Activated T-helper 1 cell treated with anti-CD3 and anti-CD28 coated beads, Interleukin-12 subunit alpha, Interleukin-12 subunit beta, Interleukin-2, Interleukin-4 antibody, amounts not matched to agents 30 ng/mL and 10 ng/mL and 1 ng/mL, durations not matched to agents 14 hours and 24 hours and 36 hours (primary cell): ENCODE measurements at regions of chr11 and their contacts with region 1.

Region 1: DNA sequence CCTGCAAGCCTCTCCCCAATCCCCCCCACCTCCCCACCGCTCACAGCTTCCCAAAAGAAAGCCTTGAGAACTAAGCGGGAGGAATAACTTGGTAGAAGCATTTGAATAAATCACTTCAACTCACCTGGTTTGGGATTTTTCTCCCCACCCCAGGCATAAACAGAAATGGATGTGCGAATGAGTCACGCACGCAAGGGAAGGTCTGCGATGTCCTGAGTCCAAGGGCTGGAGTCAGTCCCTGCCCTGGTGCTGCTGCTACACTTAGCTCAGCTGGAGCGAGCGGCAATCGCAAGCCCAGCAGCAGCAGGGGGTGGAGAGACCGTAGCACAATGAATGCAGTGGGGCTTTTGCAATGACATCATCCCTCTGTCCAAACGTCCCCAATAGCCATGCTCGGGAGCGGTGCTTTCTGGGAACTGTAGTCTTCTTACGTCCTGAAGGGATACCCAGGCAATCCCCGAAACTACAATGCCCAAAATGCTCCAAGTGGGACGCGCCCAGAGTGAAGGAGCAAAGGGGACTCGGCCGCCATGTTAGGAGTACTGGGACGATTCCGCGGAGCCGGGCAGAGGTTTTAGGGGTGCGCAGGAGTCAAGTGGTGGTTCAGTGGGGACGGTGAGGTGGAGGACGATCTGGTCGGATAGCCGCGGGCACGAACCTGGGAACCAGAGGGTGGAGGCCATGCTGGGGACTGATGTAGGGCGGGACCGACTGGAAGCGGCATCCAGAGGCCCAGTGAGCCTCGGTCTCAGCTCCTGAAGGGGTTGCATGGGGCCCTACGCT is at the start of gene RAB30:
- DNase-seq: peak; percentile 93
- H3K4me3 Mint-ChIP-seq: no peak within 1 kb of the TSS
- H3K27ac Mint-ChIP-seq: no peak within 1 kb of the TSS
- H3K4me1 Mint-ChIP-seq: peaks cover 26% of the 10 kb centered on the region
- H3K27me3 Mint-ChIP-seq: no peaks in the 10 kb centered on the region
- total RNA-seq, gene RAB30: 15.2 and 16.0 TPM in 2 replicates

Region 2: DNA sequence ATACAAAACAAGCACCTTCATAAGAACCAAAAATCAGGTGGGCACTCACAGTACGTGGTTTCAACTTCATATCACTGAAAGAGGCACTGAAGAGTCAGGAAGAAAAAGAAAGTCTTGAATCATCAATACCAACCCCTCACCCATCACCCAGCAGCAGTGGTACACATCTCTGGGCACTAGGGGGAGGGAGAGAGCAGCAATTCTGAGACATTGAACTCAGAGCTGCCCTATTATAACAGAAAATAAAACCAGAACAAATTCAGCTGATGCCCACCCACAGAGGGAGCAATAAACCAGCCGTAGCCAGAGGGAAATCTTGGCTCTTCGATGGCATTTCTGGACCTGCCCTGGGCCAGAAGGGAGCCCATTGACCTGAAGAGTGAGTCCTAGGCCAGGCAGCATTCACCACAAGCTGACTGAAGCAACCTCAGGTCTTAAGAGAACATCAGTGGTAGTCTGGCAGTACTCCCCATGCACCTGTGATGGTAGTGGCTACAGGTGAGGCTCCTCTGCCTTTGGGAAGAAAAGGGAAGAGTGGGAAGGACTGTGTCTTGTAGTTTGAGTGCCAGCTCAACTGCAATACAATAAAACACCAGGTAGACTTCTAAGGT is 295.9 kb before region 1 on chr11:
- intact Hi-C with region 1: no loop called
- DNase-seq: peak; percentile 21
- H3K4me3 Mint-ChIP-seq: no peak overlapping the region
- H3K27ac Mint-ChIP-seq: no peak overlapping the region
- H3K4me1 Mint-ChIP-seq: peaks cover 4% of the 10 kb centered on the region
- H3K27me3 Mint-ChIP-seq: peaks cover 24% of the 10 kb centered on the region

Region 3: GRCh38 chr11:82842019-82842418 is 229.7 kb before region 1 on chr11:
- intact Hi-C with region 1: no loop called
- DNase-seq: no peak
- H3K4me3 Mint-ChIP-seq: no peak overlapping the region
- H3K27ac Mint-ChIP-seq: no peak overlapping the region
- H3K4me1 Mint-ChIP-seq: no peaks in the 10 kb centered on the region
- H3K27me3 Mint-ChIP-seq: no peaks in the 10 kb centered on the region

Region 4: DNA sequence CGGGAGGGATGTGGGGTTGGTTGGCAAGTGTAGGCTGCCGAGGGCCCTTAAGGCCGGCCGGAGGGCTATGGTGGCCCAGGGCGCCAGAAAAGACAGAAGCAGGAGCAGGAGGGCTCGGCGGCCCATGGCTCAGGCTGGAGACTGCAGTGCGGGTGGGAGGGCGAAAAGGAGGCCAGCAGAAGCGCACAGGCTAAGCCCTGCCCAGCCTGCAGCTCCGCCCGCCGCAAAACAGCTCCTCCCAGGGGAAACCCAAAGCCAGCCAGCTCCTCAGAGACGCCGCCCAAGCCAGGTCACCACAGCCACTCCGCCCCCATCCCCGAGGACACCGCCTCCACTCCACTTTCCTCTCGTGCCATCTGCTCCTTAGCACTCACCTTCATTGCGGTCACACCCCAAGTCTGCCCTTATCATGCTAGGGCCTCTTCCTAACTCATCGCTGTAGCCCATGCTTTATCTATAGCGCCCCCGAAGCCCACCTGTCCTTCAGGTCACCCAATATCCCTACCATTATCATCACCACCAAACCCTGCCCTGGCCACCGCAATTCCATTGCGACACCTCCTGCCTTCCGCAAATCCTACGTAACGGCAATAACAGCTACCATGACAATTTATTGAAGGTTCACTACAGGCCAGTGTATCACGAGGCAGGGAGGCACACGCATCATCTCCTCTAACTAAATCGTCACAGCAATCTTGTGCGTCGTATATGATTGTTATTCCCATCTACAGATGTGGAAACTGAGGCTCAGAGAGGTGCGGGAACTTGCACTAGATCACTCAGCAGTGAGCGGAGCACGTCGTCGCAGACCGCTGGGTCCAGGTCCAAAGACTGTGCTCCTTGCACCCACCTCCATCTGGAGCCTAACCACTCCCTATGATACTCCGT is 171.2 kb before region 1 on chr11 and contains the start of gene PRCP:
- intact Hi-C with region 1: loop called (anchors 1 kb)
- DNase-seq: peak; percentile 93
- H3K4me3 Mint-ChIP-seq: peak within 1 kb of the TSS; percentile 99
- H3K27ac Mint-ChIP-seq: peak within 1 kb of the TSS; percentile 100
- H3K4me1 Mint-ChIP-seq: peaks cover 70% of the 10 kb centered on the region
- H3K27me3 Mint-ChIP-seq: no peaks in the 10 kb centered on the region
- total RNA-seq, gene PRCP: 22.7 and 24.0 TPM in 2 replicates

Region 5: DNA sequence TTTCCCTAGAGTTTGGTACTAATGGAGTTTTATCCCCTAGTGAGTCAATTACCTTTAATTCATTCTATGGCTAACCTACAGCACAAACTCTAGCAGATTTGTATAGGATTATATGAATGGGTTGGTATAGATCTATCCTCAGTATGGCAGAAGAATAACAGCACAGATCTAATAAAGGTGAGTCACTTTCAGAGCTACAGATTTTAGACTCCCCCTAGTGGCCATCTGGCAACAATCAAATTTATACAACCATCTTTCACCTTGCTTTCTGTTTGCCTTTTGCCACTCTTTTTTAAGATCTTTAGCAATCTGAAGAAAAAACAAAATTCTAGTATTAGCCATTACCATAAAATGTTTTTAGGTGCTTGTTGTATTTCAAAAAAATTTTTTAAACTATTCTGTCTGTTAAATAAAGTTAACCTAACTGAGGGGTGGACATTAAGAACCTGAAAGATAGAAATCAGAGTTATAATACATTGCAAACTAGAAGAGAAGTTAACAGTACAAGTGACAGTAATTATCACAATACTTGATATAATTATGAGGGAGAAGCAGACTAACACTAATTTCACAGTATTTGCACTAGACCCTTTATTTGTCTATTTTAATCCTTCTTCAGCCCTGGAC is 144.4 kb before region 1 on chr11:
- intact Hi-C with region 1: loop called (anchors 2 kb)
- DNase-seq: no peak
- H3K4me3 Mint-ChIP-seq: no peak overlapping the region
- H3K27ac Mint-ChIP-seq: no peak overlapping the region
- H3K4me1 Mint-ChIP-seq: peaks cover 19% of the 10 kb centered on the region
- H3K27me3 Mint-ChIP-seq: no peaks in the 10 kb centered on the region

Region 6: DNA sequence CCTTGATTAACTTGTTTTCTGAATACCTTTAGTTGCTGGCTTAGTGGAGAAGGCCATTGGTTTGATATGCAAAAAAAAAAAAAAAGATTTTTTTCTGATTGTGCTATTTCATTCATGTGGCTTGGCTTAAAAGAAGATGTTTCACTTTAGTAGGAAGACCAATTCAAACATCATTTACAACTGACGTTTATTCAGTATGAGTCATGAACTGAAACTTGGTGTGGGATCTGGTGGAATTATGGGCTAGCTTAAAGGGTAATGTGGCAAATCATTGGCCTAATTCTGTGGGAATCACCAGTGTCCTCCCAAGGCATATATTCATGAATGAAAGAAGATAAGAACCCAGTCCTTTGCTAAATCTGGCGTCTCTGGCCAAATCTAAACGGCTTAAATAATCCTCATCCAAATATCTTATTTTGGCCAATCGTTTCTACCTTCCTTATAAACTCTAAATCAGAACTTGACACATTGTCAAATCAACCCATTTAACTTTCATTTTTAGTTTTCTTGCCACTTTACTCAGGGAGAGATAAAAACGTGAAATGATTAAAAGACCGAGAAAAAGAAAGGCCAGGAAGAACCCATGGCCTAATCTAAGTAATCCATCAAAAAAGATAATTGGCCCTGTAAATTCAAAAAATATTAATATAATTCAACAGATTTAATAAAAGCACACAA is 93.2 kb before region 1 on chr11:
- intact Hi-C with region 1: loop called (anchors 1 kb)
- DNase-seq: no peak
- H3K4me3 Mint-ChIP-seq: peak overlapping the region; percentile 21
- H3K27ac Mint-ChIP-seq: peak overlapping the region; percentile 42
- H3K4me1 Mint-ChIP-seq: peaks cover 38% of the 10 kb centered on the region
- H3K27me3 Mint-ChIP-seq: peaks cover 3% of the 10 kb centered on the region

Region 7: GRCh38 chr11:83007909-83008580 is 63.7 kb before region 1 on chr11:
- intact Hi-C with region 1: loop called (anchors 1 kb)
- DNase-seq: no peak
- H3K4me3 Mint-ChIP-seq: no peak overlapping the region
- H3K27ac Mint-ChIP-seq: no peak overlapping the region
- H3K4me1 Mint-ChIP-seq: peaks cover 57% of the 10 kb centered on the region
- H3K27me3 Mint-ChIP-seq: no peaks in the 10 kb centered on the region

Region 8: DNA sequence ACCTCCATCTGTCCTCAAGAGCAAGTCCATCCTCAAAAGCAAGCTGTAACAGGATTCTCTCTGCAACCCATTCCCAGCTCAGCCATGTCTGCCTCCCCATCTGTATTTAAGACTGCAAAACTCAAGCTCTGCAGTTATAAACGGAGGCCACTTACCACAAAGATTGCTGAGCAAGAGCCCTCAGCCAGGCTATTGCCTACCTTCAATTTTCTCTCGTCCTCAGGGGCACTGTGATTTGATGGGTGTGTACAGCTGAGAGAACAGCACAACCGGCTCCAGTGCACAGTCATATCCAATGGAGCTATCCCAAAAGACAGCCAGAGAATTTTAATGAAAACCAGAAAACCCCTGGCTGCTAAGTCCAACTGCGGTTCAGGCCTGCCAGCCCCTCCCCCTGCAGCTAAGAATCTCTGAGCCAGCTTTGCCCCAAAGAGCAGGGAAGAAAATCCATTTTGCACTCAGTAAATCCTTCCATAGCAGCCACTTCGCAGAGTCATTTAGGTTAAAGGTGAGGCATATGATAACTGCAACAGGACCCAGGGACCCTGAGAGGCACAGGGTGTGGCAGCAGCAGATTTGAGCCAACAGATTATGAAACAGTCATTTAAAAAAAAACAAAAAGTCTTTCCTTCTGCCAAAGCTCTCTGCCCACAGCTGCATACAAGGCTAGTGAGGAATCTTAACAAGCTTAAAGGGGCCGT is 37.6 kb before region 1 on chr11:
- intact Hi-C with region 1: no loop called
- DNase-seq: no peak
- H3K4me3 Mint-ChIP-seq: no peak overlapping the region
- H3K27ac Mint-ChIP-seq: no peak overlapping the region
- H3K4me1 Mint-ChIP-seq: peaks cover 20% of the 10 kb centered on the region
- H3K27me3 Mint-ChIP-seq: peaks cover 2% of the 10 kb centered on the region

Region 9: DNA sequence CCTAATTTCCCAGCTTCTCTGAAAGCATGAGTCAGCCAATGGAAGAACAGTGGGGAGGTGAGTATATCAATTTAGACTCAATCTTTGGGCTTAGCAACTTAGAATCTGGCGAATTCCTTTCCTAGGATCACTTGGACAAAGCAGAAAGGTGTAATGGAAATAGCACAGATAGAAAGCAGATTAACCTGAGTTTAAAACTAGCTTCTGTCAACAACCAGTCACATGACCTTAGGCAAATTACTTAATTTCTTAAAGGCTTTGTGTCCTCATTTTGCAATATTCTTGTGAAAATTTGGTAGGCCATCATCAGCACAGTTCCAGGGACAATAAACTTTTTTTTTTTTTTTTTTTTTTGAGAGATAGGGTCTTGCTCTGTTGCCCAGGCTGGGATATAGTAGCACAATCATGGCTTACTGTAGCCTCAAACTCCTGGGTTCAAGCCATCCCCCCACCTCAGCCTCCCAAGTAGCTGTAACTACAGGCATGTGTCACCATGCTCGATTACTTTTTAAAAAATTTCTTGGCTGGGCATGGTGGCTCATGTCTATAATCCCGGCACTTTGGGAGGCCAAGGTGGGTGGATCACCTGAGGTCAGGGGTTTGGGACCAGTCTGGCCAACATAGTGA is 44.4 kb after region 1 on chr11:
- intact Hi-C with region 1: loop called (anchors 2 kb)
- DNase-seq: no peak
- H3K4me3 Mint-ChIP-seq: peak overlapping the region; percentile 32
- H3K27ac Mint-ChIP-seq: no peak overlapping the region
- H3K4me1 Mint-ChIP-seq: peaks cover 40% of the 10 kb centered on the region
- H3K27me3 Mint-ChIP-seq: no peaks in the 10 kb centered on the region

Region 10: GRCh38 chr11:83285771-83286528 is 214.2 kb after region 1 on chr11 and contains the start of gene CCDC90B:
- intact Hi-C with region 1: loop called (anchors 1 kb)
- DNase-seq: peak; percentile 91
- H3K4me3 Mint-ChIP-seq: peak within 1 kb of the TSS; percentile 96
- H3K27ac Mint-ChIP-seq: peak within 1 kb of the TSS; percentile 95
- H3K4me1 Mint-ChIP-seq: peaks cover 21% of the 10 kb centered on the region
- H3K27me3 Mint-ChIP-seq: peaks cover 4% of the 10 kb centered on the region
- total RNA-seq, gene CCDC90B: 24.2 and 24.5 TPM in 2 replicates

Region 11: GRCh38 chr11:83480251-83480650 is 408.5 kb after region 1 on chr11:
- intact Hi-C with region 1: no loop called
- DNase-seq: no peak
- H3K4me3 Mint-ChIP-seq: no peak overlapping the region
- H3K27ac Mint-ChIP-seq: no peak overlapping the region
- H3K4me1 Mint-ChIP-seq: no peaks in the 10 kb centered on the region
- H3K27me3 Mint-ChIP-seq: peaks cover 3% of the 10 kb centered on the region